Endothelial cell of umbilical vein (primary cell): ENCODE measurements at regions of chr11 and their contacts with region 1.

Region 1: GRCh38 chr11:79915629-79916028 is 474.8 kb upstream of the TENM4 start:
- DNase-seq: no peak
- H3K4me3 ChIP-seq: no peak overlapping the region
- H3K27ac ChIP-seq: no peak overlapping the region
- H3K4me1 ChIP-seq: no peaks in the 10 kb centered on the region
- H3K27me3 ChIP-seq: no peaks in the 10 kb centered on the region
- CTCF ChIP-seq: no peak
- POLR2A ChIP-seq: no peak

Region 2: GRCh38 chr11:81570669-81571068 is 1655.0 kb after region 1 on chr11:
- CTCF ChIA-PET with region 1: no interaction called
- POLR2A ChIA-PET with region 1: interaction called, 13 read pairs
- dilution Hi-C with region 1: no loop called
- intact Hi-C with region 1: no loop called
- DNase-seq: no peak
- H3K4me3 ChIP-seq: no peak overlapping the region
- H3K27ac ChIP-seq: no peak overlapping the region
- H3K4me1 ChIP-seq: no peaks in the 10 kb centered on the region
- H3K27me3 ChIP-seq: no peaks in the 10 kb centered on the region
- CTCF ChIP-seq: no peak
- POLR2A ChIP-seq: no peak